CD8-positive, alpha-beta memory T cell (primary cell): ENCODE measurements at regions of chr3 and their contacts with region 1.

Region 1: DNA sequence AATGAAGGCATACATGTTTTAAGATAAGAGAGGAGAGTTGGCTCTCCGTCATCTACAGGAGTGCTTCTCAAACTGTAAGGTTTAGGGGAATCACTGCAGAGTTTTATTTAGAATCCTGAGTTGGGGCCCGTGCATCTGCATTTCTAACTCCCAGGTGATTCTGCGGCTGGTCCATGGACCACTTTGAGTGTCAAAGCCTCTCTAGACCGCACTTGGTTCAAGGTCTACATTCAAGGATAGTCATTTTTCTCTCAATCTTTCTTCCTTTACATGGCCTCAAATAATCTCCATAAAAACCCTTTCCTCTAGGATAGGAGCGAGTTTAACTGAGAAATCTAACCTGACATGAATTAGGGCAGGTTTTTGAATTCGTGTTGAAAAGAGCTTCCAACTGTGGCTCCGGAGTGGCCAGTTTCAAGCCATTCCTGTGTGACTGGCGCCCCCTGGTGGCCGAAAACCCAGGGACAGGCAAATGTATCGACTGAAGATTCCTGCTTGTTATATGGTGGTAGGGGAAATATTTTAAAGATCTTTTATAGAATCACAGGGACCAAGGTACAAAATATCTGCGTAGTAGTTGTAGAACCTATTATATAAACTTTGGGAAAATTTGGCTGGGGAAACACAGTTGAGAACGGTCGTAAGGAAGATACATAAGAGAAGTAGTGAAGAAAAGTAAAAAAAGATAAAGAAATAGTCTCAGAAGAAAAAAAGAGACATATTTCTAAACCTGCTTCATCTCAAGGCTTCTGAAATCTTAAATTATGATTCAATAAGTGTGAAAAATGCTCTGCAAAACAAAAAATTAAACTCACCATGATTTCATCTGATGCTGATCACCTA is 11.9 kb downstream of the GABRR3 start:
- DNase-seq: peak; percentile 68 to 91 (median 85)
- H3K4me3 ChIP-seq: no peak overlapping the region
- H3K4me3 Mint-ChIP-seq: no peak overlapping the region
- H3K27ac ChIP-seq: no peak overlapping the region
- H3K27ac Mint-ChIP-seq: no peak overlapping the region
- H3K4me1 ChIP-seq: no peaks in the 10 kb centered on the region
- H3K4me1 Mint-ChIP-seq: peaks cover 4 to 6% (median 5%) of the 10 kb centered on the region in 3 donors
- H3K27me3 ChIP-seq: no peaks in the 10 kb centered on the region
- H3K27me3 Mint-ChIP-seq: peaks cover 4 to 12% of the 10 kb centered on the region in 2 donors

Region 2: GRCh38 chr3:97793420-97794019 is 229.7 kb before region 1 on chr3:
- CTCF ChIA-PET with region 1: interaction called, 26 read pairs
- POLR2A ChIA-PET with region 1: no interaction called
- DNase-seq: peak in 2 of 5 donors; percentile 46 to 51
- H3K4me3 ChIP-seq: no peak overlapping the region
- H3K4me3 Mint-ChIP-seq: no peak overlapping the region
- H3K27ac ChIP-seq: no peak overlapping the region
- H3K27ac Mint-ChIP-seq: no peak overlapping the region
- H3K4me1 ChIP-seq: no peaks in the 10 kb centered on the region
- H3K4me1 Mint-ChIP-seq: no peaks in the 10 kb centered on the region
- H3K27me3 ChIP-seq: no peaks in the 10 kb centered on the region
- H3K27me3 Mint-ChIP-seq: no peaks in the 10 kb centered on the region

Region 3: GRCh38 chr3:97827741-97828471 is 195.3 kb before region 1 on chr3:
- CTCF ChIA-PET with region 1: interaction called, 7 read pairs
- POLR2A ChIA-PET with region 1: interaction called, 10 read pairs
- DNase-seq: no peak
- H3K4me3 ChIP-seq: no peak overlapping the region
- H3K4me3 Mint-ChIP-seq: no peak overlapping the region
- H3K27ac ChIP-seq: no peak overlapping the region
- H3K27ac Mint-ChIP-seq: no peak overlapping the region
- H3K4me1 ChIP-seq: peaks cover 1% of the 10 kb centered on the region
- H3K4me1 Mint-ChIP-seq: peaks cover 13 to 26% (median 25%) of the 10 kb centered on the region in 3 donors
- H3K27me3 ChIP-seq: no peaks in the 10 kb centered on the region
- H3K27me3 Mint-ChIP-seq: peaks cover 0 to 3% of the 10 kb centered on the region in 2 donors

Region 4: GRCh38 chr3:97910931-97911351 is 112.3 kb before region 1 on chr3:
- CTCF ChIA-PET with region 1: no interaction called
- POLR2A ChIA-PET with region 1: no interaction called
- DNase-seq: peak; percentile 2 to 66 (median 41)
- H3K4me3 ChIP-seq: peak overlapping the region; percentile 33
- H3K4me3 Mint-ChIP-seq: peak overlapping the region; percentile 86 to 95 (median 91)
- H3K27ac ChIP-seq: peak overlapping the region; percentile 9
- H3K27ac Mint-ChIP-seq: peak overlapping the region; percentile 84 to 98 (median 96)
- H3K4me1 ChIP-seq: peaks cover 20% of the 10 kb centered on the region
- H3K4me1 Mint-ChIP-seq: peaks cover 31 to 43% (median 42%) of the 10 kb centered on the region in 3 donors
- H3K27me3 ChIP-seq: no peaks in the 10 kb centered on the region
- H3K27me3 Mint-ChIP-seq: no peaks in the 10 kb centered on the region

Region 5: DNA sequence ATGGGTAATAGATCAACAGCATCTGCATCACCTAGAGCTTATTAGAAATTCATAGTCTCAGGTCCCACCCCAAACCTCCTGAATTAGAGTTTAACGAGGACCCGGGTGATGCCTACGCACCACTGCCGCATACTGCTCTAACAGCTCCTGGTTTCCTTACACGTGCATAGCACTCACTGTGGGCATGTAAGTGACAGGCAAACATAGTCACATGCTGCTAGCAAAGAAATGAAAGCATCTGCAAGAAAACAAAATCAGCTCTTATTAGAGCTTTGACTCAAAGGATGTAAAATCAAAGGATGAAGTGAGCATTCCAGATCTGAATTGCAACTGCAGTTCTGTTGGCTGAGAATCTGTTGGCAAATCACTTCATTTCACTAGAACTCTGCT is 31.9 kb before region 1 on chr3:
- CTCF ChIA-PET with region 1: no interaction called
- POLR2A ChIA-PET with region 1: no interaction called
- DNase-seq: peak in 1 of 5 donors; percentile 21
- H3K4me3 ChIP-seq: no peak overlapping the region
- H3K4me3 Mint-ChIP-seq: peak overlapping the region; percentile 4 to 74 (median 65)
- H3K27ac ChIP-seq: no peak overlapping the region
- H3K27ac Mint-ChIP-seq: peak overlapping the region in 7 of 8 donors; percentile 50 to 91 (median 80)
- H3K4me1 ChIP-seq: peaks cover 18% of the 10 kb centered on the region
- H3K4me1 Mint-ChIP-seq: peaks cover 14 to 19% (median 17%) of the 10 kb centered on the region in 3 donors
- H3K27me3 ChIP-seq: no peaks in the 10 kb centered on the region
- H3K27me3 Mint-ChIP-seq: peaks cover 1 to 15% of the 10 kb centered on the region in 2 donors